ENCODE measurements at regions of chr19 and their contacts with region 1.

Region 1: DNA sequence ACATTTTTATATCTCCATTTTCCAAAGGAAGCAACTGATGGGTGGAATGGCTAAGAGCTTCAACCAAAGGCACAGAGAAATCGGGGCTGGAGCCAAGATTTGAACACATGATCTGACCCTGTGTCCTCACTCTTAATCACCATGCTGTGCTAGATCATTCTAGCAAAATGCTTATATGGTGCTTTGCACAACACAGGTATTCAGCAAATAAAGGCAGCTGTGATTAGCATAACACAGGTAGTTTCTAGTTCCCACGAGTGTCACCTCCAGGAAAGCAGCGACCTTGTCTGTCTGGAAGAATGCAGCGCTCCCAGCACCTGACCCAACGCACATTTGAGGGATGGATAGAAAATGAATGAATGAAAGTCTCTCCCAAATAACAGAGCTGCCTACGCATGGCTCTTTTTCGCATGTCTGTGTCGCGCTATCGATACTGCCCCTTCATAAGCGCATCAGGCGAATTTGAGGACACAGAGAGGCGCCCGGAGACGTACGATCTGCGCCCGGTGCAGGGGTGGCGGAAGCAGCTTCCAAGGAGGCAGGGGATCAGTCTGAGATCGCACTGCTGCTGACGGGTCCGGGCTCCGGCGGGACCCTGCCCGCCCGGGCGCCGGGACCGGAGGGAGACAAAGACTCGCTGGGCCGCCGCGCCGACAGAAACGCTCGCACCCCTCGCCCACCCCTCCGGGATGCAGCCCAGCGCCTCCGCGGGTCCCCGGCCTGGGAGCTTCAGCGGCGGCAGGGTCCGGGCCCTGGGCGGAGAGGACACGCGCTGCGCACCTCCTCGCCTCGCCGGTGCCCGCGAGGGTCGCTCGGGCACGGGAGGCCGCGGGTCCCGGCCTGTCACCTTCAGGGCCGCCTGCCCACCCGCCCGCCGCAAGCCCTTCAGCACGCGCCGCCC is 609 bp downstream of the EPS15L1 start:
- DNase-seq: peak; percentile 54
- H3K4me3 Mint-ChIP-seq: peak overlapping the region; percentile 80
- H3K27ac Mint-ChIP-seq: peak overlapping the region; percentile 8
- H3K4me1 Mint-ChIP-seq: peaks cover 11% of the 10 kb centered on the region
- H3K27me3 Mint-ChIP-seq: no peaks in the 10 kb centered on the region
- CTCF ChIP-seq: no peak

Region 2: GRCh38 chr19:16495982-16496612 is 24.9 kb after region 1 on chr19 and contains the starts of genes C19orf44 and CALR3:
- CTCF ChIA-PET with region 1: interaction called, 3 read pairs
- POLR2A ChIA-PET with region 1: interaction called, 10 read pairs
- intact Hi-C with region 1: no loop called
- DNase-seq: peak; percentile 100
- H3K4me3 Mint-ChIP-seq: peak within 1 kb of the TSS; percentile 100
- H3K27ac Mint-ChIP-seq: peak within 1 kb of the TSS; percentile 98
- H3K4me1 Mint-ChIP-seq: no peaks in the 10 kb centered on the region
- H3K27me3 Mint-ChIP-seq: no peaks in the 10 kb centered on the region
- CTCF ChIP-seq: no peak
- total RNA-seq, gene C19orf44: 9.0 and 9.2 TPM in 2 replicates
- total RNA-seq, gene CALR3: not detected in 2 replicates

Region 3: DNA sequence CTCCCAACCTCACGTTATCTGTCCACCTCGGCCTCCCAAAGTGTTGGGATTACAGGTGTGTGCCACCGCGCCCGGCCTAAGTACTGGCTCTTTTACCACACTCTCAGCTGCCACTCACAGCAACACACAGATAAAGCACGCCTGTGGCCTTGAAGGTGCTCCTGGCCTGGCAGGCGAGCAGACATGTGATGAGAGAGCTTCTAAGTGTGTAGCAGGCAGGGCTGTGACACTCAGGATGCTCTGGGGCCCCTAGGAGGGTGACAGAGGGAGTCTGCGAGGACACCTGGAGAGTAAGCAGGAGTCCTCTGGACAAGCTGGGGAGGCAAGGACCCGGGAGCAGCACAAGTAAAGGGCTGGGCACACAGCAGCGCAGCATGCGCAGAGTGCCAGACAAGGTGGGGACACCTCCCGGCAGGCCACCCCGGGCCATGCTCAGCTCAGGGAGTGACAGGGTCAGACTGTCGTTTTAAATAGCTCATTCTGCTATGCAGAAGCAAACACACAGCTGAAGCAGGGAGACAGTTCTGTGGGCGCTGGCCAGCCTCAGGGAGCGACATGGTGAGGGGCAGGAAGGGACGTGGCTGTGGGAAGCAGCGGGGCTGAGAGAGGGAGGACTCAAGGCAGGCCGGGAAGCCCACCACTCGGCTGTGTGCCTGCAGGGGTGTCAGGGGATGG is 130.4 kb after region 1 on chr19:
- CTCF ChIA-PET with region 1: no interaction called
- POLR2A ChIA-PET with region 1: no interaction called
- intact Hi-C with region 1: no loop called
- DNase-seq: no peak
- H3K4me3 Mint-ChIP-seq: no peak overlapping the region
- H3K27ac Mint-ChIP-seq: no peak overlapping the region
- H3K4me1 Mint-ChIP-seq: peaks cover 5% of the 10 kb centered on the region
- H3K27me3 Mint-ChIP-seq: no peaks in the 10 kb centered on the region
- CTCF ChIP-seq: no peak

Measured in MCF 10A (cell line).